ENCODE measurements at regions of chr7 and their contacts with region 1.

Region 1: DNA sequence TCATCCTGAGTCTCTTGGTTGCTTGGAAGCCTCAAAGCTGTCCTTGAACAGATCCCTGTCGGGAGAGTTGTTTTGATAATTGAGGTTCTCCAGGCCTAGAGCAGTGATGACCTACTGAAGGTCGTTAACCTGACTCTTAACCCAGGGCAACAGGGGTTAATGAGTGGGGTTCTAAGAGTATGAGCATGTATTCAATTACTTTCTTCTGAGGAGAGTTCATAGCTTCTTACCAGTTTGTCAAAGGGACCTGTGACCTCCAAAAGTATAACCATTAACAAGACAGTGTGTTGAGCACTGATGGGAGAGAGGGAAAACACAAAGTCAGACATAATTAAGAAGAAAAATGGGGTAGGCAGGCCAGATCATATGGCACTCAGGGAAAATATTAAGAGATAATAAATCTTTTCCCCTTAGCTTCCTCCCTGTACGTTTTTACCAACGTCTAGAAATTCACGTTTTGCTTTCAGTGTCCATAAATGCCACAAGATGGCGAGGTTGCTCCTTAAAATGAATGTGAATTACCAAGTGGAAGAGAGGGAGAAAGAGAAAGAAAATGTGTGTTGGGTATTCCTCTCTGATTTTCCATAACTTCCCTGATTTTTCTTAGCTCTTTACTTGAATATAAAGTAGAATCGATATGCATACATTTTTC is 97.6 kb downstream of the SUGCT start:
- DNase-seq: peak; percentile 52
- H3K4me3 Mint-ChIP-seq: no peak overlapping the region
- H3K27ac Mint-ChIP-seq: no peak overlapping the region
- H3K4me1 Mint-ChIP-seq: peaks cover 8% of the 10 kb centered on the region
- H3K27me3 Mint-ChIP-seq: no peaks in the 10 kb centered on the region

Region 2: GRCh38 chr7:40311307-40311706 is 78.9 kb after region 1 on chr7:
- CTCF ChIA-PET with region 1: no interaction called
- intact Hi-C with region 1: loop called (anchors 5 kb)
- DNase-seq: peak; percentile 11
- H3K4me3 Mint-ChIP-seq: no peak overlapping the region
- H3K27ac Mint-ChIP-seq: peak overlapping the region; percentile 34
- H3K4me1 Mint-ChIP-seq: peaks cover 9% of the 10 kb centered on the region
- H3K27me3 Mint-ChIP-seq: no peaks in the 10 kb centered on the region

Region 3: GRCh38 chr7:40604601-40605438 is 372.5 kb after region 1 on chr7:
- CTCF ChIA-PET with region 1: interaction called, 5 read pairs
- intact Hi-C with region 1: loop called (anchors 1 kb)
- DNase-seq: peak; percentile 41
- H3K4me3 Mint-ChIP-seq: no peak overlapping the region
- H3K27ac Mint-ChIP-seq: no peak overlapping the region
- H3K4me1 Mint-ChIP-seq: peaks cover 3% of the 10 kb centered on the region
- H3K27me3 Mint-ChIP-seq: peaks cover 15% of the 10 kb centered on the region